T-cell (primary cell): ENCODE measurements at regions of chr6 and their contacts with region 1.

Region 1: DNA sequence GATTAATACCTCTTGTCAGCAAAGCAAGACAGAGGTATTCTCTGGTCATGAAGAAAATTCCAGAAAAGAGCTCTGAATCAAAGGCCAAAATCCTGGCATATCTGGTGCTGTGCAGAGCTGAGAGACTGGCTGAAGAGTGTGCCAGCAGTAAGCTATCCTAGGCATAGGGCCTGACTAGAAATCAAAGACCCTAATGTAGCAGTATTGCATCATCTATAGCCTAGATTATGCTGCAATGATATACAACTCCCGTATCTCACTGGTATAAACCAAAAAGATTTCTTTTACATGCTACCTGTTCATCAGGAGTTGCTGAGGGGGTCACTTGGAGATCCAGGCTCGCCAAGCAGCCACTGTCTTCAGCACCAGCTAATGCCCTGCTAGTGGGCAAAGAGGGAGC is 30.9 kb upstream of the TRIM39 start:
- DNase-seq: no peak
- ATAC-seq: no peak
- H3K4me3 ChIP-seq: no peak overlapping the region
- H3K4me3 Mint-ChIP-seq: no peak overlapping the region
- H3K27ac ChIP-seq: no peak overlapping the region
- H3K27ac Mint-ChIP-seq: peak overlapping the region in 1 of 2 donors; percentile 31
- H3K4me1 ChIP-seq: no peaks in the 10 kb centered on the region
- H3K4me1 Mint-ChIP-seq: no peaks in the 10 kb centered on the region
- H3K27me3 ChIP-seq: no peaks in the 10 kb centered on the region
- H3K27me3 Mint-ChIP-seq: no peaks in the 10 kb centered on the region

Region 2: GRCh38 chr6:30283761-30284160 is 12.1 kb before region 1 on chr6:
- CTCF ChIA-PET with region 1: no interaction called
- POLR2A ChIA-PET with region 1: interaction called in 1 of 2 experiments, 15 read pairs
- DNase-seq: no peak
- ATAC-seq: no peak
- H3K4me3 ChIP-seq: peak overlapping the region in 1 of 2 donors; percentile 10
- H3K4me3 Mint-ChIP-seq: no peak overlapping the region
- H3K27ac ChIP-seq: no peak overlapping the region
- H3K27ac Mint-ChIP-seq: no peak overlapping the region
- H3K4me1 ChIP-seq: no peaks in the 10 kb centered on the region
- H3K4me1 Mint-ChIP-seq: no peaks in the 10 kb centered on the region
- H3K27me3 ChIP-seq: peaks cover 0 to 2% of the 10 kb centered on the region in 2 experiments
- H3K27me3 Mint-ChIP-seq: no peaks in the 10 kb centered on the region

Region 3: GRCh38 chr6:30321692-30322388 is 26.0 kb after region 1 on chr6:
- CTCF ChIA-PET with region 1: no interaction called
- POLR2A ChIA-PET with region 1: no interaction called
- DNase-seq: no peak
- ATAC-seq: no peak
- H3K4me3 ChIP-seq: no peak overlapping the region
- H3K4me3 Mint-ChIP-seq: peak overlapping the region in 1 of 3 donors; percentile 43
- H3K27ac ChIP-seq: peak overlapping the region; percentile 50
- H3K27ac Mint-ChIP-seq: peak overlapping the region; percentile 67 to 70
- H3K4me1 ChIP-seq: peaks cover 31 to 50% of the 10 kb centered on the region in 2 experiments
- H3K4me1 Mint-ChIP-seq: peaks cover 79 to 89% (median 82%) of the 10 kb centered on the region in 3 donors
- H3K27me3 ChIP-seq: no peaks in the 10 kb centered on the region
- H3K27me3 Mint-ChIP-seq: no peaks in the 10 kb centered on the region

Region 4: GRCh38 chr6:30500421-30501355 is 204.9 kb after region 1 on chr6:
- CTCF ChIA-PET with region 1: no interaction called
- POLR2A ChIA-PET with region 1: no interaction called
- DNase-seq: peak in 1 of 35 experiments; percentile 37
- ATAC-seq: peak; percentile 47 to 74 (median 62)
- H3K4me3 ChIP-seq: peak overlapping the region in 1 of 2 donors; percentile 16
- H3K4me3 Mint-ChIP-seq: peak overlapping the region; percentile 65 to 84 (median 70)
- H3K27ac ChIP-seq: peak overlapping the region; percentile 21
- H3K27ac Mint-ChIP-seq: peak overlapping the region; percentile 87 to 88
- H3K4me1 ChIP-seq: peaks cover 24 to 29% of the 10 kb centered on the region in 2 experiments
- H3K4me1 Mint-ChIP-seq: peaks cover 39 to 41% (median 39%) of the 10 kb centered on the region in 3 donors
- H3K27me3 ChIP-seq: no peaks in the 10 kb centered on the region
- H3K27me3 Mint-ChIP-seq: no peaks in the 10 kb centered on the region